Activated T-helper 2 cell treated with anti-CD3 and anti-CD28 coated beads, Interferon-gamma antibody, Interleukin-2, Interleukin-4, amounts not matched to agents 10 μg/mL and 5 μg/mL and 100 μg/mL, durations not matched to agents 14 hours and 24 hours and 36 hours (primary cell): ENCODE measurements at regions of chr1 and their contacts with region 1.

Region 1: DNA sequence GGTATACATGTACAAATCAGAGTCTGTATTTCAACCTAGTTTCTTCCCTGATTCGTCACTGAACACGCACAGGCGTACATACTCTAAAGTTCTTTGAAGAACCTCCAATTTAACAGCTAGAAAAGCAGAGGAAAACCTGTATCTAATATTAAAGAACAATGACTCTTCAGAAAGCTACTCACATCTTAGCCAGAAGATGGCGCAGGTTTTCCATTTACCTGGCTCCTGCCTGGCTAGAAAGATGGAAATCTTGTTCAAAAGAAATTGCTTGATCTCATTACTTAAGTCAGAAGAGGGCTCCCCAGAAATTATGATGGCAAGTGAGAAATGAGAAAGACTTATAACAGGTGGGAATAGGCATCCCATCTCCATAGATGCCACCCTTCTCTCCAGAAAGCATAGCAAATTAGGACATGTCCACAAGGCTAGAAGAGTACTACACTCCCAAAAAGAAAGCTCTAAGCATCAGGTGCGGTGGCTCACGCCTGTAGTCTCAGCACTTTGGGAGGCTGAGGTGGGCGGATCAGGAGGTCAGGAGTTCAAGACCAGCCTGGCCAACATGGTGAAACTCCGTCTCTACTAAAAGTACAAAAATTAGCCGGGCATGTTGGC is 19.0 kb upstream of the L1TD1 start:
- DNase-seq: peak; percentile 9
- H3K4me3 Mint-ChIP-seq: no peak overlapping the region
- H3K27ac Mint-ChIP-seq: no peak overlapping the region
- H3K4me1 Mint-ChIP-seq: no peaks in the 10 kb centered on the region
- H3K27me3 Mint-ChIP-seq: peaks cover under 1% of the 10 kb centered on the region

Region 2: GRCh38 chr1:62407405-62408009 is 231.8 kb after region 1 on chr1:
- intact Hi-C with region 1: loop called (anchors 1 kb)
- DNase-seq: no peak
- H3K4me3 Mint-ChIP-seq: no peak overlapping the region
- H3K27ac Mint-ChIP-seq: no peak overlapping the region
- H3K4me1 Mint-ChIP-seq: no peaks in the 10 kb centered on the region
- H3K27me3 Mint-ChIP-seq: peaks cover 6% of the 10 kb centered on the region

Region 3: GRCh38 chr1:62539028-62539447 is 363.4 kb after region 1 on chr1:
- intact Hi-C with region 1: no loop called
- DNase-seq: no peak
- H3K4me3 Mint-ChIP-seq: no peak overlapping the region
- H3K27ac Mint-ChIP-seq: no peak overlapping the region
- H3K4me1 Mint-ChIP-seq: peaks cover 4% of the 10 kb centered on the region
- H3K27me3 Mint-ChIP-seq: no peaks in the 10 kb centered on the region

Region 4: DNA sequence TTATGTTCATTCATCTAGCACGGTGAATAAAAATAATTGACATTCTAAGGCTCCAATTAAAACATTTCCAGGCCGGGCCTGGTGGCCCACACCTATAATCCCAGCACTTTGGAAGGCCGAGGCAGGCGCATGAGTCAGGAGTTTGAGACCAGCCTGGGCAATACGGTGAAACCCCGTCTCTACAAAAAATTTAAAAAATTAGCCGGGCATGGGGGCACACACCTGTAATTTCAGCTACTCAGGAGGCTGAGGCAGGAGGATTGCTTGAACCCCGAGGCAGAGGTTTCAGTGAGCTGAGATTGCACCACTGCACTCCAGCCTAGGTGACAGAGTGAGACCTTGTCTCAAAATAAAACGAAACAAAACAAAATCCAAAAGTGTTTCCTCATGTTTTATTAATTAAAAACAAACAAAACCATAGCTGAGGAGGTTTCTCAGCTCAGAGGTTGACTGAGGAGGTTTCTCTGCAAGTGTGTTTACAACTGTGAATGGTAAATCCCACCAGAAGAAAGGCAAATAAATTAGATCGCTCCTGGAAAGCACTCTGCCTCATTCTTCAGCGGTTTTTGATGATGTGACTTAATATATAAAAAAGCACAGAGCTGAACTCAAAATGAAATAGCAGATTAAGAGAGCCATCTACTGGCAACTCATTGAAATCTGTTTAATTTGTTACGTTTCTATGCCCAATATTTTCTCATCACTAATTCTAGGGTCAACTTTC is 570.6 kb after region 1 on chr1:
- intact Hi-C with region 1: loop called (anchors 5 kb)
- DNase-seq: no peak
- H3K4me3 Mint-ChIP-seq: no peak overlapping the region
- H3K27ac Mint-ChIP-seq: no peak overlapping the region
- H3K4me1 Mint-ChIP-seq: no peaks in the 10 kb centered on the region
- H3K27me3 Mint-ChIP-seq: peaks cover 19% of the 10 kb centered on the region